ENCODE measurements at regions of chr13 and their contacts with region 1.

Region 1: DNA sequence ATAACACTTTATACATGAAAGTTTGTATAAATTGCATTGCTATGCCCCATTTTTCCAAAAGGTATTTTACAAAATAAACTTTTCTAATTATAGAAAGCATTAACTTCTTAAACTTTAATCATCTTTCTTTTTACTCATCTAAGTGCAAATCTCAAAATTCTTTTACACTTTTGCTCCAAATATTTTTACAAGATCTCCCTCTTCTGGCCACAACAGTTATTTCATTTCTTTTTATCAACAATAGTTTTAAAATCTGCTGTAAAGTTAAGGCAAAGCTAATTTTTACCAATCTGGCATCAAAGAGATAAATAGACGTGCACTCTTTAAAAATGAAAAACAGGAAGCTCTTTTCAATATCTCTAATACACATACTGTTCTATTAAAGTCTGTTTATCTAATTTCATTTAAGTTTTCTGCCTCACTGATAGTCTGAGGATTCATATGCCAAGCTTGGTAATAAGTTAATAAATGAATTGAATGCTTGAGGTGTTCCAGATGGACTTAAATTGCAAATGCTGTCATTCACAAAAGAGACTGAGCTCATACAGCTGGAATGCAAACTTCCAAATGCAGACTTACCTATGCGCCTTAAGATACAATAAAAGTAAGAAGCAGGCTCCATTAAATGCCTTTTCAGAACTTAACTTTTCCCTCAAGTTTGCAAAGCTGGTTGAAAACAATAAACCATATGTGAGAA is 583.0 kb upstream of the ATXN8OS start:
- DNase-seq: no peak
- CTCF ChIP-seq: peak; percentile 9

Region 2: DNA sequence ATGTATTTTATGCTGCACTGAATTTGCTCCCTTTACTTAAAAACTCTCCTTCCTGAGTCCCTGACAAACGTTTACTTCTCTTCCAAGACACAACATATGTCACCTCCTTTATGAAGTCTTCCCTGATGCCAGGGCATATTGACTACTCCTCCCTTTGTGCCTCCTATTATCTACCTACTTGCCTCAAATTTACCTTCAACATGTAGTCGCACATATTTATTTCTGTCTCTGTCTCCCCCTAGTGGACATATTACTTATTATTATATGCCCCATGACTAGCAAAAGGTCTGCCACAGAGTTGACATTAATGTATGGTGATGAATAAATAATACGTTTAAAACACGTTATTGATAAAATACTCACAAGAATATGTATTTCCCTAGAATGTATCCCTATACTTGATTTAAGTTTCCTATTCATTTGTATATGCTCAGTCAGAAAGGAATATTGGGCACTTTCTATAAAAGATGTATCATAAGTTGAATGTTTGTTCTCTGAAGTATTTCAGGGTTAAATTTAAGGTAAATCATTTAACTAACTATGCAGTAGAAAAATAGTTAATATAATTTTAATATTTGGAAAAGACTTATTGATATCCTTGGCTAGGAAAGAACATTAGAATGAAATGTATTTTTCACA is 332.7 kb after region 1 on chr13:
- in situ Hi-C with region 1: loop called (anchors 25 kb)
- DNase-seq: no peak
- CTCF ChIP-seq: peak; percentile 51

Region 3: DNA sequence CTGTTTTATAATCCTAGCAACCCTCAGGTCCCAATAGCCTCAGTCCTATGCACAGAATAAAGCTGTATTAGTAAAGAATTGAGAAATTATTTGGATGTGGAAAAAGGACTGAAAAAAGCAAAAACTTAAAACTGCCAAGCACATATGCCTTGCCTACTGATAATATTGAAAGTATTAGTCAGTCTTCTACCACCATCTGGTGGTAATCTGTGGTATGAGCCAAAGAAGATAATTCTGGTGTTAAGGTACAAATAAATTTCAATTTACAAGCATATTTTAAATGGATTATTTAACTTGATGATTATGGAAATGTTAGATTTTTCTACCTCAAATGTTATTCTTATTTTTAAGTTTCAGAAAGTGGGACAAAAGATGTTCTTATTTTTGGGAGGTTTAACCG is 1044.0 kb after region 1 on chr13:
- in situ Hi-C with region 1: loop called (anchors 25 kb)
- DNase-seq: peak; percentile 54
- CTCF ChIP-seq: peak; percentile 40